ENCODE measurements at regions of chr11 and their contacts with region 1.

Region 1: GRCh38 chr11:18608376-18608775 is 8.8 kb downstream of the MISFA start:
- DNase-seq: no peak
- H3K4me3 ChIP-seq: no peak overlapping the region
- H3K27ac ChIP-seq: no peak overlapping the region
- H3K27me3 ChIP-seq: no peaks in the 10 kb centered on the region
- CTCF ChIP-seq: no peak

Region 2: DNA sequence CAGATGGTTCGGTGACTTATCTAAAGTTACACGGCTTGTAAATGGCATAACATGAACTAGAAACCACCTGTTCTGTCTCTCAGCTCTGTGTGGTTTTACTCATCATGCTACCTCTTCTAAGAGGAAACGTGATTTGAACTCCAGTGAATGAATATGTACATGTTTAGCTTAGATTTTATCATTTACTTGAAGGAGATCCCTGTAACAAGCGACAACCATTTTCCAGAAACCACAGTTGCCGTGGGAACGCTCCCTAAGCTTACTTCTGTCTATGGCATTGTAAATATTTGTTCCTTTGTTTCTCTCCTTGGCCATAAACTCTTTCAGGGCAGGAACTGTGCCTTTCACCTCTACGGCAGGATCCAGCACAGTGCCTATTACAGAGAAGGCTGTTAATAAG is 545.3 kb before region 1 on chr11:
- CTCF ChIA-PET with region 1: no interaction called
- POLR2A ChIA-PET with region 1: no interaction called
- DNase-seq: no peak
- H3K4me3 ChIP-seq: no peak overlapping the region
- H3K27ac ChIP-seq: no peak overlapping the region
- H3K27me3 ChIP-seq: no peaks in the 10 kb centered on the region
- CTCF ChIP-seq: no peak

Region 3: DNA sequence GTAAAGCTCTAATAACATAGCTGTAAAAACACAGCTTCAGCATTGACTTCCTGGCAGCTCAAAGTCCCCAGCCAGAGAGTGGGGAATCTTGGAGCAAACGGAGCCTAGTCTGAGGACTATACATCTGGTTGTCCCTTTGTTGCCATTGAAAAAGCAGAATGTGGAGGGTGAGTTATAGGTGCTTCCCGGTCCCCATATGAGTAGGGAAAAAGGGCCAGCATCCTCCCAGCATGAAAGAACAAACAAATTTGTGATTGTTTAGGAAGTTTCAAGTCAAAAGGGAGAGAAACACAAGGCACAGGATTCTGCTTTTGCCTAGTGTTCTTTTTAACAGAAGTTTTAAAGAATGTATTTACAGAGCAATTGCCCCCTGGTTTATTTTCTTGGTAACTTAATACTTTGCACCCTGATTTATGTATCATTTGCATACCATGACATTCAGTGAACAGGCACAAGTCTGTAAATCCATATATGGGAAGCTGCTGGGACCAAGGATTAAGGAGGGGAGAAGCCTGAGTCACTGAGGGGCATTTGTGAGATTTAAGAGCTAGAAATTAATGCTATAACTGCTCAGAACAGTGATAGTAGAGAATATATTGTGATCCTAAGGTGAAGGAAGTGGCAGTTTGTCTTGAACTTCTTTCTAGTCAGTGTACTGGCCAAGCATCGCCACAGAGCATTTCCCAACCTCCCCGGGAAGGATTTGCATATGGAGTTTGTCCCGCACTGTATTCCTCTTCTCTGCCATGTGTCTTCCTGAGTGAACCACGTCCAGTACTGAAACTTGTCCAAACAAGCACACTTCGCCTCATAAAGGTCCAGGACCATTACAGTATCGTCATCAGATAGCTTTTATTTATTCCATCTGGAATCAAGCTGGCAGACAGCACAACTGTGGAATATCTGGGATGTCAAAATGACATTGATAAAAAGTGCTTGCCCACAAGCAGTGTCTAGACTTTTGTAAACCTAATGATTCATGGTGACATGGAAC is 1448.9 kb after region 1 on chr11:
- CTCF ChIA-PET with region 1: no interaction called
- POLR2A ChIA-PET with region 1: interaction called, 12 read pairs
- DNase-seq: peak; percentile 24
- H3K4me3 ChIP-seq: no peak overlapping the region
- H3K27ac ChIP-seq: peak overlapping the region; percentile 55
- H3K27me3 ChIP-seq: no peaks in the 10 kb centered on the region
- CTCF ChIP-seq: no peak

Measured in AG04450 (cell line).